ENCODE measurements at regions of chr17 and their contacts with region 1.

Region 1: GRCh38 chr17:38982858-38983746 is 15.9 kb upstream of the FBXO47 start:
- DNase-seq: peak in 2 of 10 donors; percentile 48 to 57
- H3K4me3 ChIP-seq: peak overlapping the region in 1 of 59 donors; percentile 5
- H3K27ac ChIP-seq: peak overlapping the region in 2 of 59 donors; percentile 20 to 40
- H3K27me3 ChIP-seq: no peaks in the 10 kb centered on the region
- CTCF ChIP-seq: peak; percentile 50 to 87 (median 80)

Region 2: GRCh38 chr17:38925263-38925995 is 57.7 kb before region 1 on chr17 and contains the start of gene LASP1NB:
- intact Hi-C with region 1: no loop called
- DNase-seq: peak; percentile 79 to 96 (median 93)
- H3K4me3 ChIP-seq: peak within 1 kb of the TSS; percentile 27 to 83 (median 64)
- H3K27ac ChIP-seq: peak within 1 kb of the TSS; percentile 70 to 98 (median 91)
- H3K27me3 ChIP-seq: no peaks in the 10 kb centered on the region
- CTCF ChIP-seq: peak in 18 of 56 donors; percentile 4 to 37 (median 20)

Region 3: DNA sequence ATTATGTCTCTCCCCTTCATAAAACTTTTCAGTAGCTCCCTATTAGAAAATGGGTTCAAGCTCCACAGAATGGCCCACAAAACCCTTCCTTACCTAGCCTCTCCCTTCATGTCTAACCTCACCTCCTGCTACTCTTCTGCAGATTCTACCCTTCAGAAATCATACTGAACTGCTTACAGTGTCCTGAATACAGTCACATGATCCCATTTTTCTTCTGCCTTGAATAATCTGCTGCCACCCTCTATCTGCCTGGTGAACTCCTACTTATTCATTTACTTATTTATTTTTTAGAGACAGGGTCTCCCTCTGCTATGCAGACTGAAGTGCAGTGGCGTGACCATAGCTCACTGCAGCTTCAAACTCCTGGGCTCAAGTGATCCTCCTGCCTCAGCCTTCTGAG is 42.7 kb before region 1 on chr17:
- intact Hi-C with region 1: no loop called
- DNase-seq: no peak
- H3K4me3 ChIP-seq: no peak overlapping the region
- H3K27ac ChIP-seq: no peak overlapping the region
- H3K27me3 ChIP-seq: no peaks in the 10 kb centered on the region
- CTCF ChIP-seq: no peak

Region 4: DNA sequence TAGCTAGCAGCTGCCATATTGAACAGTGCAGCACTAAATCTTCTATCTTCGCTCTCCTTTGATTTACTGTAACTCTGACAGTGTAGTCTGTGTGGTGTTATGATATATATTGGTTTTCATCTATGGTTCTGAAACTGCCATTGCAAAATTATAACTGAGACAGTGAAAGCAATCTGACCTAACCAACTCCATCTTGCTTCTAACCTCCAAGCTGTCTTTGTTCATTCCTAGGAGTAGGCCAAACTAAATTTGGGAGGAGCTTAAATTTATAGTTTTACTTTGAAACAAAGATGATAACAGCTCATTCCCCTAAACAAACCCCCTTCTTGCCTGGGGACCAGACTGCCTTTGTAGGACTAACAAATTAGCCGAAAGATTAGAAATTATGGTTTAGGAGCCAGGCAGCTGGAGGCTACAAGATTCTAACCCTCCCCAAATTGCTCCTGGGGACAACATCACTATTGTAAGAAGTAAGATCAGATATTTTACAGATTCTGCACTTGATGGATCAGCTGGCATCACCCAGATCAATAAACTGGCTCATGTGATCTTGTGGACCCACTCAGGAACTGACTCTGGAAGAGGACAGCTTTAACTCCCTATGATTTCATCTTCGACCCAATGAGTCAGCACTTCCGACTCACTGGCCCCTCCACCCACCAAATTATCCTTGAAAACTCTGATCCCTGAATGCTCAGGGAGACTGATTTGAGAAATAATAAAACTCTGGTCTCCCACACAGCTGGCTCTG is 31.1 kb after region 1 on chr17:
- intact Hi-C with region 1: no loop called
- DNase-seq: no peak
- H3K4me3 ChIP-seq: no peak overlapping the region
- H3K27ac ChIP-seq: no peak overlapping the region
- H3K27me3 ChIP-seq: no peaks in the 10 kb centered on the region
- CTCF ChIP-seq: no peak

Region 5: GRCh38 chr17:39069114-39069756 is 86.1 kb after region 1 on chr17:
- intact Hi-C with region 1: loop called in 1 of 2 experiments (anchors 5 kb)
- DNase-seq: peak in 1 of 10 donors; percentile 26
- H3K4me3 ChIP-seq: no peak overlapping the region
- H3K27ac ChIP-seq: peak overlapping the region in 1 of 59 donors; percentile 12
- H3K27me3 ChIP-seq: no peaks in the 10 kb centered on the region
- CTCF ChIP-seq: peak in 55 of 56 donors; percentile 30 to 72 (median 59)

Region 6: DNA sequence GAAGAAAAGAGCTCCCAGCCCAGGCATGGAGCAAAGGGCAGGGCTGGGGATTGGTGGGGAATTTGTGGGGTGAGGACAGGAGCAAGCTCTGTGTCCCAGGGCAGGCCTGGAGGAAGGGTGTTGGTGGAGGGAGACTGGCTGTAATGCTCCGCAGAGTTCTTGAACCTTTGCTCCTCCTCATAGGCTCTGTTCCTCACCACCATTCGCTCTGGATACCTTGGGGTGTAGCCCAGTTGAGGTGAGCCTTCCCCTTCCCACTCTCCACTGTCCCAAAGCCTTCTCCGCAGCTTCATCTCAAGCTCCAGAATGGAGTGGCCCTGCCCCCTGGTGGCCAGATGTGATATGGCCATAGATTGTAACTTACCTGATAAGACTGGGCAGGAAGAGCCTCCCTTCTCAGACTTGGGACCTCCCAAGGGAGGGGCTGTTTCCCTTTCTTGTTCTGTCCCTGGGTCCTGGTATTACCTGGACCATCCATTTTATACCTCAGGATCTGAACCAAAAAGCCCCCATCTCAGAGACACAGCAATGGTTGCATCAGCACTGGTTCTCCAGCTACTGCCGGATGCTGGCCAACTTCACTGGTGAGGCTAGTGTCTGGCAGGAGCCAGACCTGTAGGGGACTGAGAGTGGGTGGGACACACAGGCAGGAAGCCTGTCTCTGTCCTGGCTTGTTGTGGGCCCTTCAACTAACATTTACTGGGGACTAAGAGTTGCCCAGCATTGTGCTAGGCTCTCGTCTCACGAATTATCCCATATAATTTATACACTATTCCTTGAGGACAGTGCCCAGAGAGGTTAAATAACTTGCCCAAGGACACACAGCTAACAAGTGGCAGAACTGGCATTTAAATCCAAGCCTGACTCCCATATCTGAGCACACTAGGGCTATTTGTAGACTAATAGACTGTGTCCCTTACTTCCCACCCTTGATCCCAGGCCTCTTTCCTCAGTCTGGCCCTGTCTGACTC is 261.8 kb after region 1 on chr17:
- intact Hi-C with region 1: loop called (anchors 5 to 10 kb)
- DNase-seq: peak; percentile 82 to 96 (median 89)
- H3K4me3 ChIP-seq: no peak overlapping the region
- H3K27ac ChIP-seq: peak overlapping the region in 1 of 59 donors; percentile 27
- H3K27me3 ChIP-seq: no peaks in the 10 kb centered on the region
- CTCF ChIP-seq: peak; percentile 81 to 99 (median 95)

Region 7: GRCh38 chr17:39668199-39668966 is 685.3 kb after region 1 on chr17 and contains the start of gene PNMT:
- intact Hi-C with region 1: loop called in 1 of 2 experiments (anchors 10 kb)
- DNase-seq: peak in 7 of 10 donors; percentile 36 to 71 (median 59)
- H3K4me3 ChIP-seq: peak within 1 kb of the TSS; percentile 11 to 65 (median 48)
- H3K27ac ChIP-seq: peak within 1 kb of the TSS in 33 of 59 donors; percentile 6 to 84 (median 41)
- H3K27me3 ChIP-seq: peaks cover 0 to 24% (median 0%) of the 10 kb centered on the region in 45 donors
- CTCF ChIP-seq: peak in 54 of 56 donors; percentile 22 to 77 (median 61)
- total RNA-seq, gene PNMT: 1.4 to 15.3 (median 6.7) TPM

Measured in dorsolateral prefrontal cortex (tissue), 120 donors.